Activated CD4-positive, alpha-beta T cell treated with anti-CD3 and anti-CD28 coated beads for 36 hours (primary cell): ENCODE measurements at regions of chr1 and their contacts with region 1.

Region 1: DNA sequence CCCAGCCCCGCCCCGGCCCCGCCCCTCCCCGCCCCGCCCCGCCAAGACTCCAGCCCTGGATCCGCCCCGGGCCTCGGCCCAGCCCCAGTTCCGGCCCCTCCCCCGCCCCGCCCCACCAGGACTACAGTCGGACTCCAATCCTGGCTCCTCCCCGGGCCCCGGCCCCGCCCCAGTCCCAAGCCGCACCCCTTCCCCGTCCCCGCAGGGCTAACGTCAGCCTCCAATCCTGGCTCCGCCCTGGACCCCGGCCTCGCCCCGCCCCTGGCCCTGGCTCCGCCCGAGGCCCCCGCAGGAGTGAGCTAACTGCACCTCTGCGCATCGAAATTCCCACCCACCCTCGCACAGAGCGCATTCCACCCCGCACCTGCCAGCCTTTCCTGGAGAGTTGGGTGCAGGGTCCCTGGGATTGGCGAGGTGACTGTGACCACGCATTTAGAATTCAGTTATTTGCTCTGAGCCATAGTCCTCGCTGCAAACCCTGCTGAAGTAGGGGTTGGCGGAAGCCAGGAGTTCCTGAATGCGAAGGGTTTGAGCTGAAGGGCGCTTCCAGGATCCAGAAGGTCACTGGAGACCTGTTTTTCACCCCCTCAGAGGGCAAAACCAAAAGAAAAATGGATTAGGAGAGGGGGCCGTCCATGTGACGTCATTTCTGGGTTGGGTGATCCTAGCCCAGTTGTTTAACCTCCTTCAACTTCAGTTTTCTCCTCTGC is 588 bp upstream of the IGSF8 start:
- DNase-seq: peak; percentile 100
- ATAC-seq: peak; percentile 88
- H3K4me3 Mint-ChIP-seq: peak overlapping the region; percentile 65
- H3K27ac Mint-ChIP-seq: peak overlapping the region; percentile 65
- H3K4me1 Mint-ChIP-seq: peaks cover 44% of the 10 kb centered on the region
- H3K27me3 Mint-ChIP-seq: no peaks in the 10 kb centered on the region

Region 2: DNA sequence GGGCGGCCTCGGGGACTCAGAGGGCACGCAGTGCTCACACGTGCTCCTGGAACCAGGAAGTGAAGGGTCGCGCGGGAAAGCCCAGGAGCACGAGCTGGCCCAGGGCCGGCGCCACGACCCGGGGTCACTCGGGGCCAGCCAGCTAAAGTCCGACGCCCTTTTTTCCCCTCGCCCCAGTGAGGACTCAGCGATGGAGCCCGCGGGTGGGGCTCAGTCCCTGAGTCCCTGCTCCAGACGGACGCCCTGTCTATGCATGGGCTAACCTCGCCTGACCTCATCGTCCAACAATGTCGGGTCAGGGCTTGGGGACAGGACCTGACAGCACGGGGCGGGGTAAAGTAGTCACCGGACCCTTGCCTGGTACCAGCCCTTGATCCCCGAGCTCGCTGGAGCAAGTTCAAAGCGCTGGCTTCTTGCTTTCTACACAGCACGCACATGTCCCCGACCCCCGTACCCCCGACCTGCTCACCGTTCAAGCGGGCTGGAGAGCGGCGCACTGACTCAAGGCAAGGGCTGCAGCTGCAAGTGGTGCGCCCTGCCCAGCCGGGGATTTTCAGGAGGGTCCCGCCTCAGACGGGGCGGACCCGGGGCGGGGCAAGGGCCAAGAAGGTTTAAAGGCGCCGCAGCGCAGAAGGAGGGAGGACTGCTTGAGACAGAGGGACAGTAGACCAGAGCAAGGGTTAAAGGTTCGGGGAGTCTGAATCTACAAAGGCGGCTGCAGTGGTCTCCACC is 173.9 kb before region 1 on chr1 and contains the start of gene TAGLN2:
- CTCF ChIA-PET with region 1: no interaction called
- POLR2A ChIA-PET with region 1: interaction called, 5 read pairs
- intact Hi-C with region 1: loop called in 1 of 2 experiments (anchors 1 kb)
- DNase-seq: peak; percentile 94
- ATAC-seq: peak; percentile 69
- H3K4me3 Mint-ChIP-seq: peak within 1 kb of the TSS; percentile 95
- H3K27ac Mint-ChIP-seq: peak within 1 kb of the TSS; percentile 98
- H3K4me1 Mint-ChIP-seq: peaks cover 38% of the 10 kb centered on the region
- H3K27me3 Mint-ChIP-seq: no peaks in the 10 kb centered on the region
- total RNA-seq, gene TAGLN2: 410 to 495 TPM

Region 3: GRCh38 chr1:160085686-160086455 is 13.1 kb before region 1 on chr1:
- CTCF ChIA-PET with region 1: interaction called, 81 read pairs
- POLR2A ChIA-PET with region 1: interaction called, 5 read pairs
- intact Hi-C with region 1: loop called (anchors 1 to 2 kb)
- DNase-seq: peak; percentile 91
- ATAC-seq: peak; percentile 76
- H3K4me3 Mint-ChIP-seq: no peak overlapping the region
- H3K27ac Mint-ChIP-seq: no peak overlapping the region
- H3K4me1 Mint-ChIP-seq: peaks cover 12% of the 10 kb centered on the region
- H3K27me3 Mint-ChIP-seq: peaks cover 20% of the 10 kb centered on the region

Region 4: DNA sequence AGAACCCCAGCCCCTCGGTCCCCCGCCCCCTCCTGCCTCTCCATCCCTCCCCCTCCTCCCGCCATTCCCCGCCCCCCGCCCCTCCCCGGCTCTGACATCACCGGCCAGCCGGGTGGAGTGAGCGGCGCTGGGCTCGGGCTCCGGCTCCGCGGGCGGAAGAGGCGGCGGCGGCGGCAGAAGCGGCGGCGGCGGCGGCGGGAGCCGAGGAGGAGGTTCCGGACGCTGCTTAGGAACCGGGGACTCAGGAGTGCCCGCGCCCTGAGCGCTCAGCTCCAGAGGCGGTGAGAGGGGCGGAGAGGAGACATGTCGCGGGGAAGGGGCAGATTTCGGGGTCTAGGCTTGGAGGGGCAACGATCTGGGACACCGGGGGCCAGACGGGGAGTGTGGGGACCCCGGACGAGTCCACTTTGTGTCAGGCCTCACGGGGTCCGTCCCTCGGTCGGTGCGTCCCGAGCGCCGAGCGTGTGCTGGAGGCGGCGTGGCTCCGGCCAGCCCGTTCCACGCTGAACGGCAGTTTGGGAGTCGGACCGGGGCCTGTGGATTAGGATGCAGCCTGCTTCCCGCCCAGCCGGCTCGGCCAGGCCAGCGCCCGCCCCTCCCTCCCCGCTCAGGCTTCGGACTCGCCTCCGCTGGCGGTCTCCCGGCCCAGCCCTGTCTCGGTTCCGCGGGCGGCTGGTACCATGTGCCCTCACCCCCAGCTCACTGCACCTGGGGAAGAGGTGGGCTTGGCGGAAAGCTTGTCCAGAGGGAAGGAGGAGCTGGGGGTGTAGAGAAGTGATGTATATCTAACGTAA is 106.4 kb after region 1 on chr1 and contains the start of gene PEA15:
- CTCF ChIA-PET with region 1: interaction called, 5 read pairs
- POLR2A ChIA-PET with region 1: no interaction called
- intact Hi-C with region 1: loop called in 1 of 2 experiments (anchors 1 kb)
- DNase-seq: peak; percentile 83
- ATAC-seq: peak; percentile 76
- H3K4me3 Mint-ChIP-seq: peak within 1 kb of the TSS; percentile 81
- H3K27ac Mint-ChIP-seq: peak within 1 kb of the TSS; percentile 86
- H3K4me1 Mint-ChIP-seq: peaks cover 47% of the 10 kb centered on the region
- H3K27me3 Mint-ChIP-seq: no peaks in the 10 kb centered on the region
- total RNA-seq, gene PEA15: 42.5 to 63.4 TPM

Region 5: GRCh38 chr1:160284782-160285344 is 185.9 kb after region 1 on chr1 and contains the start of gene PEX19:
- CTCF ChIA-PET with region 1: interaction called, 14 read pairs
- POLR2A ChIA-PET with region 1: interaction called, 3 read pairs
- intact Hi-C with region 1: loop called in 1 of 2 experiments (anchors 1 kb)
- DNase-seq: peak; percentile 97
- ATAC-seq: peak; percentile 99
- H3K4me3 Mint-ChIP-seq: peak within 1 kb of the TSS; percentile 86
- H3K27ac Mint-ChIP-seq: peak within 1 kb of the TSS; percentile 94
- H3K4me1 Mint-ChIP-seq: peaks cover 18% of the 10 kb centered on the region
- H3K27me3 Mint-ChIP-seq: no peaks in the 10 kb centered on the region
- total RNA-seq, gene PEX19: 49.2 to 55.8 TPM

Region 6: DNA sequence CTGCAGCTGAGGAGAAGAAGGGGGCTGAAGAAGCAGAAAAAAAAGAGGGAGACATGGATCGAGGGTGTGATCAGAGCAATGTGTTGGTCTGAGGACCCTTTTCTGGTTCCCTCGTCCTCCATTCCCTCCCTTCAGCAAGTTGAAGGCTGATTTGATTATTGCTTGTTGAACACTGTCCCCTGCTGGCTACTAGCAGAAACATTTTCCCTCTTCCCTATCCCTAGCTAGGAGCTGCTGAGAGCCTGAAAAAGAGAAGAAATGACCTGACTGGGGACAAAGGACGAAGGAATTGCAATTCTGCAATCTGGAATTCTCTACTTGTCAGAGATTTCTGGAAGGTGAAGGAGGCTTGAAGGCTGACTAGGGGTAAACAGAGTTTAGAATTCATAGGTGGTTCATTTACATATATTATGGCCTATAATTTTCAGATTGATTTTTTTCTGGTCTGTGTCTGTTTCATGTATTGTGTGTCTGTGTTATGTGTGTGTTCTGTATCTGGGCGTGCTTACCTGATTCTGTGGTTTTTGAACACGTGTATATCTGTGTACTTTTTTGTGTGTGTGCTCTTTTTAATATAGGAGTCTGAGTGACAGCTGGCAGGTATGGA is 277.6 kb after region 1 on chr1:
- CTCF ChIA-PET with region 1: interaction called, 20 read pairs
- POLR2A ChIA-PET with region 1: no interaction called
- intact Hi-C with region 1: loop called (anchors 1 to 2 kb)
- DNase-seq: peak; percentile 48
- ATAC-seq: peak; percentile 89
- H3K4me3 Mint-ChIP-seq: no peak overlapping the region
- H3K27ac Mint-ChIP-seq: no peak overlapping the region
- H3K4me1 Mint-ChIP-seq: peaks cover 13% of the 10 kb centered on the region
- H3K27me3 Mint-ChIP-seq: no peaks in the 10 kb centered on the region